ENCODE measurements at regions of chr16 and their contacts with region 1.

Region 1: DNA sequence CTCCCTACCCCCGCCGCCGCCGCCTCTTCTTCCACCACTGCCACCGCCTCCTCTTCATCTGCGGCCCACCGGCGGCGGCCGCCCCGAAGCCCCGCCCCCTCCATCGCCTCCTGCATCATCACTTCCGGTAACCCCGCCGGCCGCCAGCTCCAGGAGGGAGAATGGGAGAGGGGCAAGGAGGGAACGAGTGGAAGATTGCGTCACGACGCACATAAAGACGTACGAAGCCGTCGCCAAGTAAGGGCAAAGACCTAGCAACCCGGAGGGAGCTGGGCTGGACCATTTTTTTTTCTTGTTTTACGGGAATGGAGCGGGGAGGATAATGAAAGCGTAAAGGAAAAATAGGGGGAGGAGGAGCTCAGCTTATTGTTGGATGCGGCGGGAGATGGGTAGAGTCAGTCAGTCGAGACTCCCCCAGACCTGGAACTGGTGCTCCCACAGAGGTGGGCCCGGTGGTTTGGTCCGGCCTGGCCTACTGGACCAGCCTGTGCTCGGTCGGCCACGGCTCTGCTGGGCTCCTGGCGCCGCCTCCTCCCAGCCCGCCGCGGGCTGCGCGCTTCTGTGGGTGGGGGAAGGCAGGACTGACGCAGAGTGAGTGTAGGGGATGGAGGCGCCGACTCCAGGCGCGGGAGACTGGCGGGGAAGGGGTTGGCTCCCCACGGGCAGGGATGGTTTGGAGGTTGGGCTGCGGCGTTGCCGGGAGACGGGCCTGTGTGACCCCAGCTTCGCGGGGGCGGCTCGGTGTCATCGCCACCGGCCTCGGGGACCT is at the starts of genes DCUN1D3 and LYRM1:
- DNase-seq: peak; percentile 82
- H3K4me3 Mint-ChIP-seq: peak within 1 kb of the TSS; percentile 90
- H3K27ac Mint-ChIP-seq: peak within 1 kb of the TSS; percentile 97
- H3K4me1 Mint-ChIP-seq: peaks cover 73% of the 10 kb centered on the region
- H3K27me3 Mint-ChIP-seq: no peaks in the 10 kb centered on the region
- total RNA-seq, gene DCUN1D3: 17.4 and 19.2 TPM in 2 replicates
- total RNA-seq, gene LYRM1: 30.5 and 34.7 TPM in 2 replicates

Region 2: DNA sequence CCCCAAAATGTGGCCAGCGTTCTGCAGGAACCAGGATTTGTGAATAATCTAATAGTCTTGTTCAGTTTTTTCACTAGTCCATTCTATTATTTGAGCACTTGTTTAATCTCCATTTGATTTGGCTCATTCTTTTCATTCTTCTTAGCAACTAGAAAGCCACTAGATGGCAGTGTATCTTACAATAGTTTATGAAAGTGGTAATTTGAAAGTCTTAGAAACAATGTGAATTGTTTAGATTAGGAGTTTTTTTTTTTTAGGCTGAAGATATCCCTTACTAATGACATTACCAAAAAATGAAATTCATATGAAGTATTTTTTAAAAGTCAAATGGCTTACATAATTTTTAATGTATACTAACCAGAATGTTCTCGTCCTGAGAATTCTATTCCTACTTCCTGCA is 100.9 kb before region 1 on chr16:
- intact Hi-C with region 1: no loop called
- DNase-seq: no peak
- H3K4me3 Mint-ChIP-seq: no peak overlapping the region
- H3K27ac Mint-ChIP-seq: no peak overlapping the region
- H3K4me1 Mint-ChIP-seq: peaks cover 26% of the 10 kb centered on the region
- H3K27me3 Mint-ChIP-seq: no peaks in the 10 kb centered on the region

Region 3: GRCh38 chr16:20862175-20862960 is 38.1 kb before region 1 on chr16:
- intact Hi-C with region 1: no loop called
- DNase-seq: no peak
- H3K4me3 Mint-ChIP-seq: no peak overlapping the region
- H3K27ac Mint-ChIP-seq: no peak overlapping the region
- H3K4me1 Mint-ChIP-seq: peaks cover 32% of the 10 kb centered on the region
- H3K27me3 Mint-ChIP-seq: no peaks in the 10 kb centered on the region

Region 4: DNA sequence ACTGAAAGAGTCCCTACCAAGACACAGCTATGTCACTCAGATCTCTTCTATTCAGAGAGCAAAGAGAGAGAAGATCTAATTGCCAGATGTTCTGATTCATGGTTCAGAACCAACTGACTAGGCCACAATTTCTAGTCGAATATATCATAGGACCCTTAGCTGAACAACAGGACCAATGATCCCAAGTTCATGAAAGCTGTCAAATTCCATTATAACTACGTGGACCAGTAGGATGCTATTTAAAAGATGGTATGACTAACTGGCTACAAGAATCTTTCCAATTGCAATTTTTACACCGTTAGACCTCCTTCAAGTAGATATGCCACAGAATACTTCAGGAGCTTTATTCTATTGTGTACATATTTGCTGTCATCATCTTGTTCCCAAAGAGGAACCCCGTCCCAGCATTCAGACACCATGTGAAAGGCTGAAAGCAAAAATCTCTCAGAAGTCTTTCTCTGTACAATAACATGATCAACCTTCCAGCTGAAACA is 26.3 kb before region 1 on chr16:
- intact Hi-C with region 1: loop called (anchors 1 kb)
- DNase-seq: no peak
- H3K4me3 Mint-ChIP-seq: peak overlapping the region; percentile 62
- H3K27ac Mint-ChIP-seq: peak overlapping the region; percentile 74
- H3K4me1 Mint-ChIP-seq: peaks cover 80% of the 10 kb centered on the region
- H3K27me3 Mint-ChIP-seq: no peaks in the 10 kb centered on the region

Region 5: DNA sequence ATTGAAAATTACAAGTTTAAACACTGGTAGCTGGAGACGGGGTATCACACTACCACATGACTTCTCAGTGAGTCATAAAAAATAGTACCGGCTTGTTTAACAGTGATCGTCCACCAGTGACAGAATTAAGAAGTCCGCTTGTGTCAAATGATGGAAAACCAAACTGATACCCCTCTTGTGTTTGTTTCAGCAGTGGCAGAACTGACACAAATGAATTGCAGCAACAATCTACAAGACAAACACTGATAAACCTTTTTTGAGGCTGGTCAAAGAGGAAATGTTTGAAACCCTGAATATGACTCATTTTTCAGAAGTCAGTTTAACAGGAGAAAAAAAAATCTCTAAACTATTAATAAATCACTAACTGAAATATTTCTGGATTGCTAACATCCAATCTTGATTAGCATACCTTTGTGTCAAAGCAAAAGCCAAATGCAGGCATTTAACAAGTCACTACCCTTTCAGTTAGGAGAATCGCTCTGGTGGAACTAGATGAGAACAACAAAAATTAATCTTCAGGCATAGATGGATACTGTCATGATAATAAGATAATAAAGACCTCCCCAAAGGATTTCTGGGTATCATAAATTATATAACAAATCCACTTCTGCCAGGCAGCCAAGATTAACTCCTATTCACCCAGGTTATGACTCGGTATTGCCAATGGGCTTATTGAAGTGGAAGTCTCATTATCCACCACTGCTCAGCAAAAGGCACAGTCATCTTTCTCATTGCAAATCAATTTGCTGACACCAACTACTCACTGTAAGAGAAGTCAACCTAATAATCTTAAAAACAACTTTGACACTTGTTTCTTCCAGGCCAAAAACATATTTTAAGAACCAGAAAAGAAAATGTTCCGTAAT is 21.1 kb before region 1 on chr16:
- intact Hi-C with region 1: loop called (anchors 1 kb)
- DNase-seq: no peak
- H3K4me3 Mint-ChIP-seq: no peak overlapping the region
- H3K27ac Mint-ChIP-seq: peak overlapping the region; percentile 76
- H3K4me1 Mint-ChIP-seq: peaks cover 77% of the 10 kb centered on the region
- H3K27me3 Mint-ChIP-seq: no peaks in the 10 kb centered on the region

Region 6: GRCh38 chr16:20944861-20945574 is 44.5 kb after region 1 on chr16:
- intact Hi-C with region 1: loop called (anchors 1 kb)
- DNase-seq: peak; percentile 69
- H3K4me3 Mint-ChIP-seq: no peak overlapping the region
- H3K27ac Mint-ChIP-seq: peak overlapping the region; percentile 83
- H3K4me1 Mint-ChIP-seq: peaks cover 51% of the 10 kb centered on the region
- H3K27me3 Mint-ChIP-seq: peaks cover 4% of the 10 kb centered on the region

Measured in activated T-helper 2 cell treated with anti-CD3 and anti-CD28 coated beads, Interferon-gamma antibody, Interleukin-2, Interleukin-4, amounts not matched to agents 10 μg/mL and 5 μg/mL and 100 μg/mL, durations not matched to agents 14 hours and 24 hours and 36 hours (primary cell).